Activated B cell treated with CpG ODN at 0.5 μM for 24 hours (primary cell): ENCODE measurements at regions of chr2 and their contacts with region 1.

Region 1: GRCh38 chr2:69816923-69817542 is 12.4 kb upstream of the GMCL1 start:
- DNase-seq: no peak
- ATAC-seq: peak; percentile 89
- H3K4me3 Mint-ChIP-seq: no peak overlapping the region
- H3K27ac Mint-ChIP-seq: no peak overlapping the region
- H3K4me1 Mint-ChIP-seq: peaks cover 5% of the 10 kb centered on the region
- H3K27me3 Mint-ChIP-seq: no peaks in the 10 kb centered on the region
- CTCF ChIP-seq: peak; percentile 64

Region 2: GRCh38 chr2:69436938-69437750 is 379.9 kb before region 1 on chr2 and contains the start of gene NFU1:
- CTCF ChIA-PET with region 1: no interaction called
- POLR2A ChIA-PET with region 1: no interaction called
- intact Hi-C with region 1: no loop called
- DNase-seq: peak; percentile 85
- ATAC-seq: peak; percentile 95
- H3K4me3 Mint-ChIP-seq: peak within 1 kb of the TSS; percentile 96
- H3K27ac Mint-ChIP-seq: peak within 1 kb of the TSS; percentile 93
- H3K4me1 Mint-ChIP-seq: peaks cover 34% of the 10 kb centered on the region
- H3K27me3 Mint-ChIP-seq: no peaks in the 10 kb centered on the region
- CTCF ChIP-seq: no peak
- total RNA-seq, gene NFU1: 24.3 and 31.1 TPM in 2 replicates

Region 3: DNA sequence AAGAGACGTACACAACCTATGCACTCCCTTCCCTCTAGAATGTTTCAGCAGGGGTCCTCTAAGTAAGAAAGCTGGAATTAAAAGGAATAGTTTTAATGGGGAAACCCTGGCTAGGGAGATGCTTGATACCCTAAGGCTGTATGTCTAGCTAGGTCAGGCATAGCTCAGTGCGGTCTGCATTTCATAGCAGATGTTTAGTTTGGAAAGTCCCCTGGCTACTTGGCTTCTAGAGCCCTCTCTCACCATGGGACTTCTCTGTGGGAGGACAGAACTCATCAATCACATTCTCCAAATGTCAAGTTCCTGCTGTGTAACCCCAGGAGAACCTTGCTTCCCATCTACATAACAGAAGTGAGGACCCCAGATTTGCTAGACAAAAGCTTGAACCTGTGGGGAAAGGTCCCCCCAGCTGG is 99.2 kb before region 1 on chr2:
- CTCF ChIA-PET with region 1: interaction called, 362 read pairs
- POLR2A ChIA-PET with region 1: no interaction called
- intact Hi-C with region 1: no loop called
- DNase-seq: no peak
- ATAC-seq: no peak
- H3K4me3 Mint-ChIP-seq: no peak overlapping the region
- H3K27ac Mint-ChIP-seq: no peak overlapping the region
- H3K4me1 Mint-ChIP-seq: peaks cover 4% of the 10 kb centered on the region
- H3K27me3 Mint-ChIP-seq: peaks cover 39% of the 10 kb centered on the region
- CTCF ChIP-seq: no peak

Region 4: GRCh38 chr2:69734035-69734631 is 82.9 kb before region 1 on chr2:
- CTCF ChIA-PET with region 1: interaction called, 16 read pairs
- POLR2A ChIA-PET with region 1: interaction called, 5 read pairs
- intact Hi-C with region 1: no loop called
- DNase-seq: no peak
- ATAC-seq: no peak
- H3K4me3 Mint-ChIP-seq: no peak overlapping the region
- H3K27ac Mint-ChIP-seq: no peak overlapping the region
- H3K4me1 Mint-ChIP-seq: peaks cover 55% of the 10 kb centered on the region
- H3K27me3 Mint-ChIP-seq: no peaks in the 10 kb centered on the region
- CTCF ChIP-seq: no peak

Region 5: GRCh38 chr2:69774984-69775982 is 41.8 kb before region 1 on chr2:
- CTCF ChIA-PET with region 1: interaction called, 8 read pairs
- POLR2A ChIA-PET with region 1: interaction called, 3 read pairs
- intact Hi-C with region 1: loop called (anchors 2 kb)
- DNase-seq: no peak
- ATAC-seq: peak; percentile 81
- H3K4me3 Mint-ChIP-seq: peak overlapping the region; percentile 67
- H3K27ac Mint-ChIP-seq: peak overlapping the region; percentile 86
- H3K4me1 Mint-ChIP-seq: peaks cover 68% of the 10 kb centered on the region
- H3K27me3 Mint-ChIP-seq: no peaks in the 10 kb centered on the region
- CTCF ChIP-seq: no peak

Region 6: DNA sequence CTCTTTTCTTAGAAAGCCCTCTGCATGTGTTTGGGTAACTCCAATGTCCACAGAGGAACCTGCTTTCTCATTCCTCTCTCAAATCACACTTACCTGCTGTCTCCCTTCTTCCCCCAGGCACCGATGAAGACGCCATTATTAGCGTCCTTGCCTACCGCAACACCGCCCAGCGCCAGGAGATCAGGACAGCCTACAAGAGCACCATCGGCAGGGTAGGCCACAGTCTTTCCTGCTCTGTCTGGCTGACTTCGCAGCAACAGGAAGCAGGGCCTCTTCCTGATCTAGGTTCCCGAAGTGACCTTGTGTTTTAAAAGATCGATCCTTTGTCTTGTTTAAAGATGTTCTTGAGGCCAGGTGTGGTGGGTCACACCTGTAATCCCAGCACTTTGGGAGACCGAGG is 12.6 kb before region 1 on chr2:
- CTCF ChIA-PET with region 1: interaction called, 15 read pairs
- POLR2A ChIA-PET with region 1: interaction called, 6 read pairs
- intact Hi-C with region 1: no loop called
- DNase-seq: no peak
- ATAC-seq: no peak
- H3K4me3 Mint-ChIP-seq: peak overlapping the region; percentile 41
- H3K27ac Mint-ChIP-seq: peak overlapping the region; percentile 37
- H3K4me1 Mint-ChIP-seq: peaks cover 46% of the 10 kb centered on the region
- H3K27me3 Mint-ChIP-seq: no peaks in the 10 kb centered on the region
- CTCF ChIP-seq: no peak